ENCODE measurements at regions of chr7 and their contacts with region 1.

Region 1: DNA sequence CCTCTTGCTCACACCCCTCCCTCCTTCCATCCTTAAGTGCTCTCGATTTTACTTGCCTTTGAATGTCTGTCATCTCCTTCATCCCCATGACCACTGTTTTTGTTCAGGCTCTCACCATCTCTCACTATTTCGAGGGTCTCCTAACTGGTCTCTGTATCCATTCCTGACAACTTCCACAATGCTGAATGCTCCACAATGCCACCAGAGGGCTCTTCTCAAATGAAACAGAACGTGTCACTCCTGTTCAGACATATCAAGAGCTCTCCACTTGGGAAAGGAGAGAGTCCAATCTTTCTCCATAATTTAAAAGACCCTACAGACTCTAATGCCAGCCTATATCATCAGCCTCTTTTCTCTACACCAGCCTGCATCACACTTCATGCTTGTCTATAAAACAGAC is 9.0 kb upstream of the SLC13A1 start:
- DNase-seq: no peak
- ATAC-seq: peak in 1 of 2 donors; percentile 52

Region 2: GRCh38 chr7:122790132-122790531 is 418.7 kb before region 1 on chr7:
- intact Hi-C with region 1: no loop called
- DNase-seq: no peak
- ATAC-seq: no peak

Region 3: DNA sequence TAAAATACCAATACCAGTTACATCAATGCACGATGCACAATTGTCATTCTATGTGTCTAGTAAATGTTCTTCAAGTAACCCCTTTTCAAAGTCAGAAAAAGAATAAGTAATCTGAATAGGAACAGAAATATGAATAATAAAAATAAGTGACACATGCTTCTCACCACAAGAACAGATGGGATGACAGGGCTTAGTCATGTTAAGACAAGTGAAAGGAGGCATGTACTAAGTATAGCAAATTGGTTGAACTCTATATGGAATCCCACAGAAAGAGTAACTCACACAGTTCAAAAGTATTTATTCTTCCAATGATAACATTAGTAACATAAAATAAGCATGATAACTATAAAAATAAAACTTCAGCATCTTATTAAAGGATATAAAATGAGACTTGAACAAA is 112.4 kb before region 1 on chr7:
- intact Hi-C with region 1: no loop called
- DNase-seq: no peak
- ATAC-seq: no peak

Region 4: GRCh38 chr7:123120286-123120685 is 88.5 kb before region 1 on chr7:
- intact Hi-C with region 1: no loop called
- DNase-seq: no peak
- ATAC-seq: no peak

Region 5: DNA sequence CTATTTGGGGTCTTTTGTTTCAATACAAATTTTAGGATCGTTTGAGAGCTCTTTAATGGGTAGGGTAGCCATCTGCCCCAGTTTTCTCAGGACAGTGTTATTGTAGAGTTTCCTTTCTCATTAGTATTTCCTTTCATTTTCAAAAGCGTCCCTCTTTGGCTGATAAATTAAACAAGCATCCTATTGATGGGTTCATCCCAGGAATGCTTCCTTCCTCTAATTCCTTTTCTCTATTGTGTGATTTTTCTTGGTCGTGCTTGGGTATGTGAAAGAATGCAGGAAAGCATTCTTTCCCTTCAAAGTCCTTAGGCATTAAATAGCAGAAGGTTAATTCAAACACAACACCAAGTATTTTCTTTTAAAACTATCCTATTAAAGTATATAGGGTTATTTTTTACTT is 23.0 kb before region 1 on chr7:
- intact Hi-C with region 1: loop called in 1 of 2 experiments (anchors 2 kb)
- DNase-seq: no peak
- ATAC-seq: no peak